CD4-positive, alpha-beta memory T cell (primary cell): ENCODE measurements at regions of chr4 and their contacts with region 1.

Region 1: DNA sequence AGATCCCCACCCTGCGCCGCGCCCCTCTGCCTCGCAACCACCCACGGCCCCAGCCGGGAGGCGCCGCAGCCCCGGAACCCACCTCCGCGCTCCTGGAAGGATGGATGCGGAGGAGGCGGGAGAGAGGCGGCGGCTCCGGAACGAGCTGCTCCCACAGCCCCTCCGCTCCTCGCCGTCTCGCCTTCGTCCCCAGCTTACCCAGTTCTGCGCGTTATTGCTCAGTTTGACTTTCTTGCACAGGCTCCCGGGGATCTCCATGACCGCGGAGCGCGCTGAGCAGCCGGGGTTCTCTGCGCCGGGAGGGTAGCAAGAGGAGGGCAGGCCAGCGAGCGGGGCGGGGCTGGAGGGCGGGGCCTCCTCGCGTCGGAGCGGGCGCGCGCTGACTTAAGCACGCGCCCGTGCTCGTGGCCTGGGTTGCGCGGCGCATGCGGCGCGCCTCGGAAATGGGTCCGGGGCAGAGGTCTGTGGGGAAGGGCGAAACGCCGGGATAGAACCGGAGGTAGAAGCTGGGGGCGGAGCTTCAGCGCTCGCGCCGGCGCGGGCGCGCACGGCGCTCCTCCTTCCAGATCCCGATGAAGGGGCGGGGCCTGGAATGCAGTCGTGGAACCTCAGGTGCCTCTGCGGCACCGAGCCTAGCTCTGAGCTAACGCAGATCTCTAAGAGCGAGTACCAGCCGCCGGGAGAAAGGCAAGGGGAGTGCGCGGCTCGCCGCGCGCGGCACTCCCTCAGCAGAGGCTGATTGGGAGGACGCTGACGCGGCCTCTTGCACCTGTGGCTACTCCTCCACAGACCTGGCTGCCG is at the start of gene PAPSS1:
- DNase-seq: peak; percentile 95 to 96 (median 96)
- H3K4me3 ChIP-seq: peak within 1 kb of the TSS; percentile 53 to 94
- H3K4me3 Mint-ChIP-seq: peak within 1 kb of the TSS; percentile 91 to 98 (median 96)
- H3K27ac ChIP-seq: peak within 1 kb of the TSS; percentile 73
- H3K27ac Mint-ChIP-seq: peak within 1 kb of the TSS; percentile 91 to 98 (median 94)
- H3K4me1 ChIP-seq: peaks cover 25% of the 10 kb centered on the region
- H3K4me1 Mint-ChIP-seq: peaks cover 27 to 45% (median 34%) of the 10 kb centered on the region in 4 donors
- H3K27me3 ChIP-seq: no peaks in the 10 kb centered on the region
- H3K27me3 Mint-ChIP-seq: no peaks in the 10 kb centered on the region
- total RNA-seq, gene PAPSS1: 23.0 to 23.1 TPM

Region 2: GRCh38 chr4:106315968-106316772 is 1404.0 kb before region 1 on chr4 and contains the starts of genes AIMP1 and TBCK:
- CTCF ChIA-PET with region 1: no interaction called
- POLR2A ChIA-PET with region 1: interaction called, 13 read pairs
- intact Hi-C with region 1: loop called (anchors 1 kb)
- DNase-seq: peak; percentile 90 to 93 (median 92)
- H3K4me3 ChIP-seq: peak within 1 kb of the TSS; percentile 91 to 94
- H3K4me3 Mint-ChIP-seq: no peak within 1 kb of the TSS
- H3K27ac ChIP-seq: peak within 1 kb of the TSS; percentile 96
- H3K27ac Mint-ChIP-seq: no peak within 1 kb of the TSS
- H3K4me1 ChIP-seq: peaks cover 41% of the 10 kb centered on the region
- H3K4me1 Mint-ChIP-seq: peaks cover 22 to 44% (median 23%) of the 10 kb centered on the region in 4 donors
- H3K27me3 ChIP-seq: no peaks in the 10 kb centered on the region
- H3K27me3 Mint-ChIP-seq: no peaks in the 10 kb centered on the region
- total RNA-seq, gene AIMP1: 47.0 to 51.9 TPM
- total RNA-seq, gene TBCK: 61.3 to 62.3 TPM

Region 3: GRCh38 chr4:106530821-106531220 is 1189.3 kb before region 1 on chr4:
- CTCF ChIA-PET with region 1: no interaction called
- POLR2A ChIA-PET with region 1: no interaction called
- intact Hi-C with region 1: no loop called
- DNase-seq: no peak
- H3K4me3 ChIP-seq: no peak overlapping the region
- H3K4me3 Mint-ChIP-seq: no peak overlapping the region
- H3K27ac ChIP-seq: no peak overlapping the region
- H3K27ac Mint-ChIP-seq: no peak overlapping the region
- H3K4me1 ChIP-seq: no peaks in the 10 kb centered on the region
- H3K4me1 Mint-ChIP-seq: no peaks in the 10 kb centered on the region
- H3K27me3 ChIP-seq: no peaks in the 10 kb centered on the region
- H3K27me3 Mint-ChIP-seq: no peaks in the 10 kb centered on the region

Region 4: GRCh38 chr4:107757864-107758476 is 37.8 kb after region 1 on chr4:
- CTCF ChIA-PET with region 1: interaction called, 11 read pairs
- POLR2A ChIA-PET with region 1: no interaction called
- intact Hi-C with region 1: no loop called
- DNase-seq: peak in 4 of 5 donors; percentile 16 to 32 (median 20)
- H3K4me3 ChIP-seq: no peak overlapping the region
- H3K4me3 Mint-ChIP-seq: no peak overlapping the region
- H3K27ac ChIP-seq: no peak overlapping the region
- H3K27ac Mint-ChIP-seq: no peak overlapping the region
- H3K4me1 ChIP-seq: no peaks in the 10 kb centered on the region
- H3K4me1 Mint-ChIP-seq: peaks cover 0 to 4% (median 0%) of the 10 kb centered on the region in 4 donors
- H3K27me3 ChIP-seq: peaks cover 8% of the 10 kb centered on the region
- H3K27me3 Mint-ChIP-seq: peaks cover 2% of the 10 kb centered on the region in 2 donors

Region 5: DNA sequence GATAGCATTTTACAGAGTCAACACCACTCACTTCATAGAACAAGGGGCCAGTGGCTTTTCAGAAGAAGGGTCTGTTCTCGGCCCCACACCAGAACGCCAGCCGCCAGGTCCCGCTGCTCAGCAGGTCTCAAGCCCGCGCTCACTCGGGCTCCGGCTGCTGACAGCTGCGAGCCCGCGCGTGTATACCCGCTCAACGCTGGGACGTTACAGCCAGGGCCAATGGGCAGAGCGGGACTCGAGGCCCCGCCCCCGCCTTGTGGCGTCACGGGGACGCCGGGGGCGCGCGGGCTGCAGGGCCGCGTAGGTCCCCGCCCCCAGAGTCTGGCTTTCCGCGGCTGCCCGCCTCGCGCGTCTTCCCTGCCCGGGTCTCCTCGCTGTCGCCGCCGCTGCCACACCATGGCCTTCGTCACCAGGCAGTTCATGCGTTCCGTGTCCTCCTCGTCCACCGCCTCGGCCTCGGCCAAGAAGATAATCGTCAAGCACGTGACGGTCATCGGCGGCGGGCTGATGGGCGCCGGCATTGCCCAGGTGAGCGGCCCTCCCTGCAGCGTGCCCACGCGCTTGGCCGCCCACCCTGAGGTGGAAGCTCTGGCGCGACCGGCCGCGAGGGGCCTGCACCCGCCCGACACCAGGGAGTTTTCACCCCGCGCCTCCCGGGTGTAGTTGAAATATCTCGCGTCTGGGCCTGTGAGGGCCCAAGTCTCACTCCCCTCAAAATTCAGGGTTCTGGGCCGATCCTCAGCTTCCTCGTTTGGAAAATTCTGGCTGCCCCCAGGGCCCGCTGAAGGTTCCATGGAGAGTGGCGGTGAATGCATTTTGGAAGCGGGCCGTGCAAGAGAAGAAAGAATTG is 269.6 kb after region 1 on chr4 and contains the start of gene HADH:
- CTCF ChIA-PET with region 1: no interaction called
- POLR2A ChIA-PET with region 1: interaction called, 12 read pairs
- intact Hi-C with region 1: loop called (anchors 1 kb)
- DNase-seq: peak; percentile 92 to 95 (median 95)
- H3K4me3 ChIP-seq: peak within 1 kb of the TSS; percentile 49 to 75
- H3K4me3 Mint-ChIP-seq: peak within 1 kb of the TSS; percentile 90 to 99 (median 97)
- H3K27ac ChIP-seq: peak within 1 kb of the TSS; percentile 80
- H3K27ac Mint-ChIP-seq: peak within 1 kb of the TSS; percentile 87 to 98 (median 96)
- H3K4me1 ChIP-seq: peaks cover 39% of the 10 kb centered on the region
- H3K4me1 Mint-ChIP-seq: peaks cover 30 to 53% (median 42%) of the 10 kb centered on the region in 4 donors
- H3K27me3 ChIP-seq: no peaks in the 10 kb centered on the region
- H3K27me3 Mint-ChIP-seq: no peaks in the 10 kb centered on the region
- total RNA-seq, gene HADH: 20.0 to 23.0 TPM

Region 6: GRCh38 chr4:108181704-108182103 is 461.6 kb after region 1 on chr4:
- CTCF ChIA-PET with region 1: no interaction called
- POLR2A ChIA-PET with region 1: no interaction called
- intact Hi-C with region 1: no loop called
- DNase-seq: no peak
- H3K4me3 ChIP-seq: no peak overlapping the region
- H3K4me3 Mint-ChIP-seq: no peak overlapping the region
- H3K27ac ChIP-seq: no peak overlapping the region
- H3K27ac Mint-ChIP-seq: no peak overlapping the region
- H3K4me1 ChIP-seq: no peaks in the 10 kb centered on the region
- H3K4me1 Mint-ChIP-seq: peaks cover 0 to 2% (median 0%) of the 10 kb centered on the region in 4 donors
- H3K27me3 ChIP-seq: no peaks in the 10 kb centered on the region
- H3K27me3 Mint-ChIP-seq: peaks cover 3 to 4% of the 10 kb centered on the region in 2 donors

Region 7: DNA sequence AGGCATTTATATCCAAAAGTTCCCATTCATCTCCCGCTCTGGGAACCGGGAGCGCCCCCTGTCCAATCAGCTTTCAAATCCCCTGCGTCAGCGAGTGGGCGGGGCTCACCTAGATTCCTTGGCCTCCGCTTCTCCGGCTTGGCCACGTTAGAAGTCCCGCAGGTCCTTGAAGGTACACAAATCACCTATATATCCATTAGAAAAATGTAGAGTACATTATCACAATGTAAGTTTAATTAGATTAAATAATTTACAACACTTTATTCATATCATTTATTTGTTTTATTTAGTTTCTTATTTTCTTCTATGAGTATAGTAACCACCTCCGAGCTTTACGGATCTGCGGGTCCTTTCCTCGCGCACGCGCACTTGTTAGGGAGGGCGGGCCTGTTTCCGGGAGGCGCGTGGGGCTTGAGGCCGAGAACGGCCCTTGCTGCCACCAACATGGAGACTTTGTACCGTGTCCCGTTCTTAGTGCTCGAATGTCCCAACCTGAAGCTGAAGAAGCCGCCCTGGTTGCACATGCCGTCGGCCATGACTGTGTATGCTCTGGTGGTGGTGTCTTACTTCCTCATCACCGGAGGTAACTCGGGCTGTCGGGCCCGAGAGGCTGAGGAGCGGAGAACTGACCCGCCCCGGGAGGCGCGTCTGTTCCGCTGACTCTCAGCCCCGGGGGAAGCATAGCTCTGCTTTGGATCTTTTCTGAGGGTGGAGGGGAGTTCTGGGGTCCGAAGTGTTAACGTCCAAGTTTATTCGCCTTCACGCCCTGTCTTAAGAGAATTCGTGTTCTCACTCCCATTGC is 930.3 kb after region 1 on chr4 and contains the start of gene OSTC:
- CTCF ChIA-PET with region 1: no interaction called
- POLR2A ChIA-PET with region 1: interaction called, 9 read pairs
- intact Hi-C with region 1: loop called (anchors 10 kb)
- DNase-seq: peak; percentile 91 to 95 (median 93)
- H3K4me3 ChIP-seq: peak within 1 kb of the TSS; percentile 77 to 86
- H3K4me3 Mint-ChIP-seq: peak within 1 kb of the TSS; percentile 93 to 99 (median 98)
- H3K27ac ChIP-seq: peak within 1 kb of the TSS; percentile 98
- H3K27ac Mint-ChIP-seq: peak within 1 kb of the TSS; percentile 98 to 99 (median 99)
- H3K4me1 ChIP-seq: peaks cover 37% of the 10 kb centered on the region
- H3K4me1 Mint-ChIP-seq: peaks cover 23 to 50% (median 37%) of the 10 kb centered on the region in 4 donors
- H3K27me3 ChIP-seq: no peaks in the 10 kb centered on the region
- H3K27me3 Mint-ChIP-seq: no peaks in the 10 kb centered on the region
- total RNA-seq, gene OSTC: 67.9 to 72.1 TPM